ENCODE measurements at regions of chr9 and their contacts with region 1.

Region 1: DNA sequence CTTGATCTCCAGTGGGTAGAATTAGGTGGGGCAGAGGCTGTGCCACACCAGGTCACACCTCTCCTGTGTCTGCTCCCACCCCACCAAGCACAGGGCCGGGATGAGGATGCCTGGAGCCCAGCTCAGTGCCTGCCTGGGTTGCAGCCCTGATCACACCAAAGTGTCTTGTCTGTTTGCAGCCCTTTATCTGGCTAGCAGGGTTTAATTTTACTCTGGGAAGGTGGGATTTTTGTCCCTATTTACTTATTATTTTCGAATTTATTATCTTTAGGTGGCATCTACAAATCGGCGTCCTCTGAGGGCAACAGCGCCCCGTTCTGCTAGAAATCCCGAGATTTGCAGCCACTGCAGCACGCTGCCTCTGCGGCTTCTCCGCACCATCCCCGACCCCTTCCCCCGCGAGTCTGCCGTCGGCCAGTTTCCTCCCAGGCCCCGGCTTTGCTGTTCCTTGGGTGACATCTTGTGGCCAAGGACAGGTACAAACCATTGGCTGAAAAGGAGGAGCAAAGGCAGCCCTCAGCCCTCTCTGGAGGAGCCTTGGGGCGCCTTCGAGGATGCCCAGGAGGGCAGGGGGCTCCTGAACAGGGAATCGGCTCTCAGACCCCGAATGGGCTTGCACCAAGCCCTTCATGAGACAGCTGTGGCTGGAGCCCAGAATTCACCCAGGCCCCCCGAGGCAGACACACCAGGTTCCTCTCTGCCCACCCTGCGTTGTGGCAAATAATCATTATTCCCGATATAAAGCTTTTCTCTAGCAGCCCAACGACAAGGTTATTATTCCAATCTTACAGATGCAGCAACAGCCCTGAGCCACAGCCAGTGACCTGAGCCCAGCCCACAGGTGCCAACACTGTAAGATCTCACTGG is 113.0 kb downstream of the GAPVD1 start:
- DNase-seq: peak; percentile 59
- H3K4me3 ChIP-seq: peak overlapping the region in 2 of 4 donors; percentile 20 to 30
- H3K27ac ChIP-seq: no peak overlapping the region
- H3K4me1 ChIP-seq: peaks cover 4 to 10% (median 7%) of the 10 kb centered on the region in 4 donors
- H3K27me3 ChIP-seq: no peaks in the 10 kb centered on the region
- CTCF ChIP-seq: peak; percentile 59 to 84 (median 73)
- EP300 ChIP-seq: no peak
- POLR2A ChIP-seq: no peak

Region 2: GRCh38 chr9:124906966-124907365 is 467.7 kb before region 1 on chr9:
- in situ Hi-C with region 1: loop called in 1 of 4 experiments (anchors 25 kb)
- intact Hi-C with region 1: no loop called
- DNase-seq: no peak
- H3K4me3 ChIP-seq: no peak overlapping the region
- H3K27ac ChIP-seq: no peak overlapping the region
- H3K4me1 ChIP-seq: peaks cover 0 to 11% (median 0%) of the 10 kb centered on the region in 4 donors
- H3K27me3 ChIP-seq: no peaks in the 10 kb centered on the region
- CTCF ChIP-seq: no peak
- EP300 ChIP-seq: no peak
- POLR2A ChIP-seq: no peak

Measured in transverse colon (tissue), 4 donors.